Right ventricle myocardium inferior (tissue), 1 donor: ENCODE measurements at regions of chr12 and their contacts with region 1.

Region 1: GRCh38 chr12:24991209-24992049 is 42.5 kb upstream of the BCAT1 start:
- DNase-seq: no peak
- ATAC-seq: peak; percentile 67

Region 2: GRCh38 chr12:24879644-24880043 is 111.8 kb before region 1 on chr12:
- intact Hi-C with region 1: no loop called
- DNase-seq: no peak
- ATAC-seq: no peak

Region 3: GRCh38 chr12:25017336-25017735 is 25.9 kb after region 1 on chr12:
- intact Hi-C with region 1: no loop called
- DNase-seq: no peak
- ATAC-seq: no peak

Region 4: DNA sequence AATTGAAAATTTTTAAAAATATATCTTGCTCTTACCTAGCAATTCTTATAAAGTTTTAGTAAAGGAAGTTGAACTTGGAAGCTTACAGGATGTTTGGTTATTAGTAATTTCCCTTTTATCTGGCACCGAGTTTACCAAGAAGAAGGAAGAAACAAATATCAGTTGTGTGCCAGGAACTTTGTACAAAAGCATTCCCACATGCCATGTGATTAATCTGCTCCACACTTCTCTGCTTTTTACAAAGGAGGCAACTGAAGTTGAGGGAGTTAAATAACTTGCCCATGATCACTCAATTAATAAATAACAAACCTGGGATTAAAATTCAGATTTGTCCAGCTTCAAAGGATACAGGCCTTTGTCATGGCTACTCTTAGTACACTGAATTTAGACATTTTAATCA is 79.9 kb after region 1 on chr12:
- intact Hi-C with region 1: no loop called
- DNase-seq: no peak
- ATAC-seq: no peak

Region 5: GRCh38 chr12:25130741-25131188 is 139.3 kb after region 1 on chr12:
- intact Hi-C with region 1: loop called (anchors 1 kb)
- DNase-seq: no peak
- ATAC-seq: no peak